Activated CD4-positive, alpha-beta memory T cell treated with anti-CD3 and anti-CD28 coated beads for 36 hours (primary cell): ENCODE measurements at regions of chr3 and their contacts with region 1.

Region 1: DNA sequence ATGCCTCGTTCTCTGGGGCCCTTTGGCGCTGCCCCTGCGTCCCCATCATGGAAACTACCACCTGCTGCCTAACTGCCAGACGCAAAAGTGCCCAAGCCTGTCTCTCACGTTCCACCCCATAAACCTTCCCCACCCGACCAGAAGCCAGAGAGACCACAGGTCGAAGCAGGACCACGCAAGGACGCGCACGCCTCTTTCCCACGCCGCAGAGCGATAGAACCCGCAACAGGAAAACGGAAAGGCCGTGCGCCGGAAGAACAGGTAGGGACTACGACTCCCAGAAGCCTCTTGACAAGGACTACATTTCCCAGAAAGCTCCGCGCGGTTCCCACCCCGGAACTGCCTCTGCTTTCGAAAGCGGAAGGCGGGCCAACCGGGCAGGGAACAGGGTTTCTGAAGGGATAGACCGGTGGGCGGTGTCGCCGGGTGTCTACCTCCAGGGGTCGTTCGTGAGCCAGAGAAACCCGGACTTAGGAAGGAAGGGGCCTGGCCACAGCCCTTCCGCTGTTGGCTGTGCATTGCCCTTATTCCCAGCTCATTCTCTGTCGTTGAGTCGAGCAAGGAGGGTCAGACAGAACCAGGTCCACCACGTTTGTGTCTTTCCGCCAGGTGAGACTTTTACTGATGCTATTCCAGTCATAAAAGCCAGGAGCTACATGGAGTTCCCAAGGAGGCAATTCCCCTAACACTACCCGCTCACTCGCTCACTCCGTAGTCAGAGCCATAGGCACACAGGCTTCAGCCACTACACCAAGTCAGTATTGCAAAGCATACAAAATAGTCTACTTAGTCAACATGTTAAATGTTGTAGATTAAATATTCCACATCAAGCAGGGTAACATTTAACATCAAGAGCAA is 56.6 kb upstream of the ZBTB38 start:
- DNase-seq: peak; percentile 100
- H3K4me3 Mint-ChIP-seq: peak overlapping the region; percentile 89
- H3K27ac Mint-ChIP-seq: peak overlapping the region; percentile 90
- H3K4me1 Mint-ChIP-seq: peaks cover 49% of the 10 kb centered on the region
- H3K27me3 Mint-ChIP-seq: no peaks in the 10 kb centered on the region

Region 2: GRCh38 chr3:141328286-141329166 is 16.8 kb after region 1 on chr3:
- CTCF ChIA-PET with region 1: interaction called, 12 read pairs
- POLR2A ChIA-PET with region 1: interaction called, 4 read pairs
- intact Hi-C with region 1: loop called (anchors 1 kb)
- DNase-seq: peak; percentile 50
- H3K4me3 Mint-ChIP-seq: no peak overlapping the region
- H3K27ac Mint-ChIP-seq: peak overlapping the region; percentile 35
- H3K4me1 Mint-ChIP-seq: peaks cover 16% of the 10 kb centered on the region
- H3K27me3 Mint-ChIP-seq: no peaks in the 10 kb centered on the region

Region 3: DNA sequence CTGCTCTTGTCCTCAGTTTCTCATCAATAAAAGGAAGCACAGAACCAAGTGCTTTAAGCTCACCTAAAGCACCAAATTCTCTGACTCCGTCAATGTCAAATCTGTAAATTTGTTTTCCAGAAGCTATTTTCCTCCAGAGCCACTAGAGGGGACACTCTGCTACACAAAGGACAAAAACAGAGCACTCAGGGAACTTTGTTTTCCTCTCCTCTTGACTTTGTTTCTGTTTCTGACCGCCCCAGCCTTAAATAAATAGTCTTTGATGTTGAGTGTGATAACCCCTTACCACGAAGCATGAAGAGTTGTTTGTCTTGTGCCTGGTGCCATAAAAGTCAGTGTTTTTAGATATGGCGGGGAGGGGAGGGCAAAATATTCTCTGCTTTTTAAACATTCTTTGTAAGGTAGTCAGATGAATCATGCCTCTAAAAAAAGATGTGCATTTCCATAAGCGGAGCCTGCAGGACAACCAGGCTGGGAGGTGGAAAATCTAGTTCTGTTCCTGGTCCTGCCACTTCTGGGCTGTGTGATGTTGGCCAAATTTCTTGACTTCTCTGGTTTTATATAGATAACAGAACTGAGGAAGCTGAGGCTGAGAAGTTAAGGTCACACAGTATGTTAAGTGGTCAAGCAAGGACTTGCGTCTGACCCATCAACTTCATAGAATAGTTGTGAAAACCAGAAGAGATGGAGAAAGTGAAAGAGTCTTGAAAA is 49.3 kb after region 1 on chr3:
- CTCF ChIA-PET with region 1: interaction called, 19 read pairs
- POLR2A ChIA-PET with region 1: no interaction called
- intact Hi-C with region 1: loop called (anchors 1 kb)
- DNase-seq: no peak
- H3K4me3 Mint-ChIP-seq: peak overlapping the region; percentile 30
- H3K27ac Mint-ChIP-seq: no peak overlapping the region
- H3K4me1 Mint-ChIP-seq: peaks cover 10% of the 10 kb centered on the region
- H3K27me3 Mint-ChIP-seq: peaks cover 1% of the 10 kb centered on the region

Region 4: GRCh38 chr3:141370065-141370533 is 58.4 kb after region 1 on chr3:
- CTCF ChIA-PET with region 1: interaction called, 10 read pairs
- POLR2A ChIA-PET with region 1: interaction called, 3 read pairs
- intact Hi-C with region 1: loop called (anchors 1 kb)
- DNase-seq: peak; percentile 68
- H3K4me3 Mint-ChIP-seq: no peak overlapping the region
- H3K27ac Mint-ChIP-seq: peak overlapping the region; percentile 40
- H3K4me1 Mint-ChIP-seq: peaks cover 58% of the 10 kb centered on the region
- H3K27me3 Mint-ChIP-seq: no peaks in the 10 kb centered on the region

Region 5: GRCh38 chr3:141426404-141427034 is 114.8 kb after region 1 on chr3:
- CTCF ChIA-PET with region 1: interaction called, 19 read pairs
- POLR2A ChIA-PET with region 1: no interaction called
- intact Hi-C with region 1: no loop called
- DNase-seq: no peak
- H3K4me3 Mint-ChIP-seq: no peak overlapping the region
- H3K27ac Mint-ChIP-seq: no peak overlapping the region
- H3K4me1 Mint-ChIP-seq: peaks cover 33% of the 10 kb centered on the region
- H3K27me3 Mint-ChIP-seq: no peaks in the 10 kb centered on the region

Region 6: GRCh38 chr3:141529256-141530132 is 217.8 kb after region 1 on chr3:
- CTCF ChIA-PET with region 1: no interaction called
- POLR2A ChIA-PET with region 1: no interaction called
- intact Hi-C with region 1: no loop called
- DNase-seq: no peak
- H3K4me3 Mint-ChIP-seq: no peak overlapping the region
- H3K27ac Mint-ChIP-seq: peak overlapping the region; percentile 56
- H3K4me1 Mint-ChIP-seq: peaks cover 77% of the 10 kb centered on the region
- H3K27me3 Mint-ChIP-seq: no peaks in the 10 kb centered on the region